Breast epithelium (tissue), 4 donors: ENCODE measurements at regions of chr14 and their contacts with region 1.

Region 1: DNA sequence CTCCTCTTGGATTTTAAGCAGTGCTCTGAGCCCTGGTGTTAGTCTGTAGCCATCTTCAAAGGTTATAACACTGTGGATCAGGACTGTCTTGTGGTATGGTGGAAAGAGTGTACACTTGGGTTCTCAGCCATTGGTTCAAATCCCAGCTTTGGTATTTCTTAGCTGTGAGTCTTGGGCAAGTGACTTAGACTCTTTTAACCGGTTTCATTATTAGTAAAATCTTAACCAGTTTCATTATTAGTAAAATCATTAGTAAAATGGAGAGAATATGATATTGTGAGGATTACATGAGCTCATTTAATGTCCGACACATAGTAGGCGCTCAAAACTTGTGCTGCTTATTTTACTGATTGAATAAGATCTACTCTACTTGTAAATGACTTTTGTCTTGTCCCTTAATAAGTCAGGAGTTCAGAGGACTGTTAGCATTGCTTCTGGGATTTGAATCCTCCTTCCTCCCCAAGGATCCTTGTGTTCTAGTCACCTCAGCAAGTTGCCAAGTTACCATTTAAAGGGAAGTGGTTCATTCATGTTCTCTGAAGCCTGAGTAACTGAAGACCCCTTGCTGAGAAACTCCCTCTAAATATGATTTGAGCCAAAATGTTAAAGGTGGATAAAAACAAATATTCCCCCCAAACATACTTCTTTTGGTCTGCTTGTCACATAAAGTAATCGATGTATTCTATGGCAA is 12.4 kb downstream of the TTLL5 start:
- DNase-seq: no peak
- H3K4me3 ChIP-seq: no peak overlapping the region
- H3K27ac ChIP-seq: no peak overlapping the region
- H3K4me1 ChIP-seq: no peaks in the 10 kb centered on the region
- H3K27me3 ChIP-seq: no peaks in the 10 kb centered on the region
- CTCF ChIP-seq: no peak
- POLR2A ChIP-seq: no peak

Region 2: DNA sequence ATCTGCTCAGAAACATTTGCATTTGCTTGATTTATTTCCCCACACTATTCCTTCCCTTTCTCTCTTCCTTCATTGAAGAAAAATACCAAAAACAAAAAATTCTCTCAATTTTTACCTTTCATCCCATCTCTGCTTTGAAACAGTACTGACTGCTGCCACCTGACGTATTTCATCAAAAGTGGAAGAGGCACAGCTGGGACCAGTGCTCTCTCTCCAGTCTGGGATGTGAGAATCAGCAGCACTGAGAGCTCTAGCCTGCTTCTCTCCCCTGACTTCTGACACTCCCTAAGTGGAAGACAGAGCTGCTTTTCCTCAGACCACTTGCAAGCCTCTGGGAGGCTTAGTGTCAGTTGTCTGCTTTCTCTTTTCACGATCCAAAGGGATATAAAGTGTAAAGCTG is 24.4 kb after region 1 on chr14:
- intact Hi-C with region 1: loop called (anchors 2 kb)
- DNase-seq: no peak
- H3K4me3 ChIP-seq: no peak overlapping the region
- H3K27ac ChIP-seq: no peak overlapping the region
- H3K4me1 ChIP-seq: no peaks in the 10 kb centered on the region
- H3K27me3 ChIP-seq: no peaks in the 10 kb centered on the region
- CTCF ChIP-seq: no peak
- POLR2A ChIP-seq: no peak